ENCODE measurements at regions of chr16 and their contacts with region 1.

Region 1: GRCh38 chr16:51818342-51818944 is 667.4 kb upstream of the SALL1 start:
- H3K4me3 ChIP-seq: no peak overlapping the region
- H3K27ac ChIP-seq: no peak overlapping the region
- H3K4me1 ChIP-seq: peaks cover 5% of the 10 kb centered on the region; the same call in 1 of the 2 replicates
- CTCF ChIP-seq: peak; percentile 27; the same call in 1 of the 2 replicates

Region 2: GRCh38 chr16:51834133-51834532 is 15.7 kb after region 1 on chr16:
- CTCF ChIA-PET with region 1: interaction called, 17 read pairs
- POLR2A ChIA-PET with region 1: no interaction called
- H3K4me3 ChIP-seq: no peak overlapping the region
- H3K27ac ChIP-seq: no peak overlapping the region
- H3K4me1 ChIP-seq: no peaks in the 10 kb centered on the region
- CTCF ChIP-seq: no peak

Region 3: DNA sequence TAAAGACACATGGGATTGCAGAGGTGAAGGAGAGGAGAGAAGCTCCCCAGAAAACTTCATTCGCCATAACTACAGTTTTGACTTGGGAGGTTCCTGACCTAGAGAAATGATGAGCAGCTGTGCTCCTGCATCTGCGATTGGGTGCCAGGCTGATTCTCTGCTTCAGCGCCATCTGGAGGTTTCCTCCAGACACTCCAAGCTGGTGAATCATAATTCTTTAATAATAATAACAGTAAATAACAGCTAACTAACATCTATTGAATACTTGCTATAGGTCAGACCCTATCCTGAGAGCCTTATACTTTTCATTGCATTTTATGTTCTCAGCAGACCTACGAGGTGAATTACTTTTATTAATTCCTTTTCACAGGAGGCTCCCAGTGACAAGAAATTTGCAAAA is 152.7 kb after region 1 on chr16:
- CTCF ChIA-PET with region 1: interaction called, 21 read pairs
- POLR2A ChIA-PET with region 1: no interaction called
- H3K4me3 ChIP-seq: no peak overlapping the region
- H3K27ac ChIP-seq: no peak overlapping the region
- H3K4me1 ChIP-seq: no peaks in the 10 kb centered on the region
- CTCF ChIP-seq: no peak

Region 4: DNA sequence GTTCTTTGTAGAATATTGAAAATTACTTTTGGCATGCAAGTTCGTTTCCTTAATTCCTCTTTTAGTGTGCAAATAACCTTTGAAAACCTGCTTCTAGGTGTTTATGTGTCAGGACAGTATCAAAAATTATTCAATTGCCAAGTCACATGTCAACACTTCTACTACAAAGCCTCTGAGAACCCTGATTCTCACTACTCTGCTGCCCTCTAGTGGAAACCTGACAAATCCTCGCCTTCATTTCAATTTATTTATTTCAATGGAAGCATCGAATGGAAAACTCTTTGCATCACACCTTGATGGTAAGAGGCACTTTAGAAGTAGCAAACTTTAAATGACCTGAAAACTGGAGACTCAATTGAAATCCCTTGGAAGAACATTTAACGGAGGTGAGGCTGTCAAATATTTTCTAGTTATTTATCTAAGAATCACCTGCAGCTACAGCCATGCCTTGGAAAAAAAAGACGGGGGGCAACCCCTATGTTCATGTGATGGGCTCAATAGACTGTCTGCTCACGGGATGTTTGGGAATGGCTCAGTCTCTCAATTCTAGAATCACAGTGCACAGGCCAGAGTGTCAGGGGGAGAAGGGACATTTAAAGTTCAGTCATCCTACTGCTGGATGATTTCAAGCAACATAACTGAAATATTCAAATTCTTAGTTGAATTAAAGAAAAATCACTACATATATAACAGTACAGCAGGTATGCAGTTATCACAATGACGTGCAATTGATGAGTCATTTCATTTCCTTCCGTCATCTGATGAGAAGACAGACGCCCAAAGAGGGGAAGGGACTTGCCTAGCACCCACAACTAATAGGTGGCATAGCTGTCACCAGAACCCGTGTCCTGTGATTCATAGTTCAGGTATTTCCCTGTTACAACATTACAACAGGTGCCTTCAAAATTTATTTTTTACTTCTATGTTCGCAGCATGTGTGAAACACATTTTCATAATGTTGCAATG is 164.6 kb after region 1 on chr16:
- CTCF ChIA-PET with region 1: interaction called, 41 read pairs
- POLR2A ChIA-PET with region 1: no interaction called
- H3K4me3 ChIP-seq: no peak overlapping the region
- H3K27ac ChIP-seq: no peak overlapping the region
- H3K4me1 ChIP-seq: peaks cover 6% of the 10 kb centered on the region; the same call in 1 of the 2 replicates
- CTCF ChIP-seq: peak; percentile 50; the same call in 1 of the 2 replicates